ENCODE measurements at regions of chr19 and their contacts with region 1.

Region 1: DNA sequence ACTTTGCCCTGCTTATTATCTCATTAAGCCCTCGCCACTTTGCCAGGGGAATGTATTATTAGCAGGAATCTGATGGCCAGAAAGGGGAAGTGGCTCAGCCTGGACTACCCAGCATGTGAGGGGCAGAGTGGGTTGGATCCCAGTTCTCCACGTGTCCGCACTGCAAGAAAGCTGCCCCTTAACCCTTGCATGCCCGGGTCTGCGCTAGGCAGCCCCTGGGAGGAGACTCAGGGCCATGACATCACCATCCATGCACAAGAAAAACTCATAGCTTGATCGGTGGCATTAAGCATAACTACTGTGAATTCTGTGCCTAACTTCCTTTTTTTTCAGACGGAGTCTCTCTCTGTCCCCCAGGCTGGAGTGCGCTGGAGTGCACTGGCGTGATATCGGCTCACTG is 8.9 kb downstream of the CACNG8 start:
- DNase-seq: no peak
- H3K4me3 ChIP-seq: no peak overlapping the region
- H3K27ac ChIP-seq: no peak overlapping the region
- H3K4me1 ChIP-seq: no peaks in the 10 kb centered on the region
- H3K27me3 ChIP-seq: no peaks in the 10 kb centered on the region
- CTCF ChIP-seq: no peak

Region 2: GRCh38 chr19:53942001-53942786 is 29.5 kb before region 1 on chr19:
- CTCF ChIA-PET with region 1: no interaction called
- POLR2A ChIA-PET with region 1: interaction called, 20 read pairs
- intact Hi-C with region 1: no loop called
- DNase-seq: no peak
- H3K4me3 ChIP-seq: no peak overlapping the region
- H3K27ac ChIP-seq: no peak overlapping the region
- H3K4me1 ChIP-seq: no peaks in the 10 kb centered on the region
- H3K27me3 ChIP-seq: no peaks in the 10 kb centered on the region
- CTCF ChIP-seq: no peak

Measured in PC-9 (cell line).